HEK293 (cell line): ENCODE measurements at regions of chr19 and their contacts with region 1.

Region 1: DNA sequence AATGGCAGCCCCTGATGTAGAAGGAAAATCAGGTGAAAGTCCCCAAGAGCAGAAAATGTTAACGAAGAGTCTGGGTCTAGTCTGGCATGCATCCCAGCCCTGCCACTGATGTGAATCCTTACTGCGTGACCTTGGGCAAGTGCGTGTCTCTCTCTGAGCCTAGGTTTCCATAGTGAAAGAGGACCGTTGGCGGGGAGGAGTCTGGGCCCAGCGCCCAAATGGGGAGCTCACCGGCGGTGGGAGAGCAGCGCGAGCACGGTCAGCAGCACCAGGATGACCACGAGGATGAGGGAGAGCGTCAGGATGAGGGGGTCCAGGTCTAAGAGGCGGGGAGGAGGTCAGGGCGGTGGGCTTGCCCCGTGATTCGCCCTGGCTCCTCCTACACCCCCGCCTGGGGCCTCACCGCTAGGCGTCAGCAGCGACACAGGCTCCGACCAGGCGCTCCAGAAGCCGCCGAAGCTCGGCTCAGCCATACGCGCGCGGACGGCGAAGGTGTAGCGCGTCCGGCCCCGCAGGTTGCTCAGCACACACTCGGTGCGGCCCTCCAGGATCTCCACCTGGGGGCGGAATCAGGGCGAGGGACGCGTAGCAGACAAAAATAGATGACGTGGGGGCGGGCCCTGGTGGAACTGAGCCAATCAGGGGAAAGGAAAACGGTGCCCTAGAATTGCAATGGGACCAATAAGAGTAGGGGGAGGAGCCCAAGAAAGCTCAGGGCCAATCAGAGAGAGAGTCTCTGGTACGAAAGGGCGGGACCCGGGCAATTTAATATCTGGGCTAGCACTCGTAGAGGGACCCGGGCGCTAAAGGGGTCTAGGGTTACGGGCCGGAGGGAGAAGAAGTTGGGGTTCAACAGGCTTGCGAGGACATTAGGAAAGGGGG is 3.2 kb downstream of the EPOR start:
- H3K4me3 ChIP-seq: peak overlapping the region; percentile 55
- H3K27ac ChIP-seq: peak overlapping the region; percentile 59; the same call in 1 of the 2 replicates
- H3K4me1 ChIP-seq: no peaks in the 10 kb centered on the region; the same call in 1 of the 2 replicates
- CTCF ChIP-seq: peak; percentile 97

Region 2: DNA sequence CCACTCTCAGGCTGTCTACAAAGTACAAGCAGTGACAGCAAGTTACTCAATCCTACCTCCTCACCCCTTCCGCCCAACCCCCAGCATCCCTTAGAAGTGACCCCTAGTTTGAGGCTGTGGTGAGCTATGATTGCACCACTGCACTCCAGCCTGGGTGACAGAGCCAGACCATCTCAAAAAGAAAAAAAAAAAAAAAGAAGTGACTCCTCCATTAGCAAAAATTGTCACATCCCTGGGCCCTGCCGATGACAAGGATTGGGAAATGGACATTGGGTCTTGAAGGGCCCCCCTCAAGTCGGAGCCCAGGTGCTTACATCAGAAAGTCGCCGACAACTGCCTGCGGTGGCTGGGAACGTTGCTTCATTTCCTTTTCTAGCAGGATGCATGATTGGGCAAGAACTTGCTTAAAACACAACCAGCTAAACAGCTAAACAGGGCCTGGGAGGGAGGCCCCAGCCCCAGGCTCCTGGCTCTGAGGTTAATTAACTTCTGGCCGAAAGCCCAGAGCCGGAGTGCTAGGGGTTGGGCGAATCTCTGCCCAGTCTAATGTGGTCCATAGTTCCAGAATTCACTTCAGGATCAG is 56.7 kb before region 1 on chr19:
- CTCF ChIA-PET with region 1: interaction called, 10 read pairs
- POLR2A ChIA-PET with region 1: interaction called, 6 read pairs
- H3K4me3 ChIP-seq: no peak overlapping the region
- H3K27ac ChIP-seq: peak overlapping the region; percentile 63; the same call in 1 of the 2 replicates
- H3K4me1 ChIP-seq: peaks cover 20% of the 10 kb centered on the region
- CTCF ChIP-seq: no peak

Region 3: GRCh38 chr19:11355160-11356073 is 25.5 kb before region 1 on chr19 and contains the start of gene PLPPR2:
- CTCF ChIA-PET with region 1: interaction called, 4 read pairs
- POLR2A ChIA-PET with region 1: interaction called, 14 read pairs
- H3K4me3 ChIP-seq: peak within 1 kb of the TSS; percentile 49
- H3K27ac ChIP-seq: no peak within 1 kb of the TSS
- H3K4me1 ChIP-seq: no peaks in the 10 kb centered on the region; the same call in 1 of the 2 replicates
- CTCF ChIP-seq: no peak

Region 4: DNA sequence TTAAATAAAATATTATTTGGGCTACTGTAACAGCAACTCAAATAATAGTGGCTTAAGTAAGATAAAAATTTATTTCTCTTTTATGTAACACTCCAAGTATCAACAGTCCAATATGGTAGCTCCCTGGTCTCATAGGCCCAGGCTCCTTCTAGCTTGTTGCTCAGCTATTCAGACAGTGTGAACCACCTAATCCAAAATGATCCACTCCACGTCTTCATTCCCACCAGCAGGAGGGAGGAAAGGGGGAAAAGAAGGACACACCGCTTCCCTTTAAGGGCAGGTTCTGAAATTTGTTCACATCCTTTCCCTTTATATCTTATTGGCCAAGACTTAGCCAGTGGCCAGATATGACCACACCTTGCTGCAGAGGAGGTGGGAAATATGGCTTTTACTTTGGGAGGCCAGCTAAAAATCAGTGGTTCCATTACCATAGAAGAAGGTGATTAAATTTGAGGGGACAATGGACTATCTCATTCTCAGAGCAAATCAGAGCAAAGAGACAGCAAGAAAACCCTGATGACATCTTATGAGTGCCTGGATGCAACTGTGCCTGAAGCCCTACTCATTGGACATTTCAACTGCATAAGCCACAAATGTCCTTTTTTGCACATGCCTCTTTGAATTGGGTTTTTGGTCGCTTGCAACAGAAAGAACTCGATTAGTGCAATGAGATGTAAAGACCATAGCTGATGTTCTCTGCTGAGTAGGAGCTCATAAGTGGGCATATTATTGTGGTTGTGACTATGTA is 10.2 kb after region 1 on chr19:
- CTCF ChIA-PET with region 1: interaction called, 15 read pairs
- POLR2A ChIA-PET with region 1: interaction called, 8 read pairs
- H3K4me3 ChIP-seq: no peak overlapping the region
- H3K27ac ChIP-seq: no peak overlapping the region
- H3K4me1 ChIP-seq: no peaks in the 10 kb centered on the region
- CTCF ChIP-seq: no peak

Region 5: GRCh38 chr19:11405846-11406643 is 25.2 kb after region 1 on chr19:
- CTCF ChIA-PET with region 1: interaction called, 13 read pairs
- POLR2A ChIA-PET with region 1: interaction called, 3 read pairs
- H3K4me3 ChIP-seq: no peak overlapping the region
- H3K27ac ChIP-seq: no peak overlapping the region
- H3K4me1 ChIP-seq: no peaks in the 10 kb centered on the region
- CTCF ChIP-seq: no peak

Region 6: GRCh38 chr19:11435058-11435832 is 54.4 kb after region 1 on chr19 and contains the starts of genes ODAD3 and PRKCSH:
- CTCF ChIA-PET with region 1: interaction called, 66 read pairs
- POLR2A ChIA-PET with region 1: interaction called, 27 read pairs
- H3K4me3 ChIP-seq: peak within 1 kb of the TSS; percentile 91
- H3K27ac ChIP-seq: peak within 1 kb of the TSS; percentile 4; the same call in 1 of the 2 replicates
- H3K4me1 ChIP-seq: 0 out of 2 replicates have a peak, but pooled peaks cover 4% of the 10 kb centered on the region
- CTCF ChIP-seq: peak; percentile 96

Region 7: GRCh38 chr19:11482384-11483050 is 101.6 kb after region 1 on chr19:
- CTCF ChIA-PET with region 1: interaction called, 42 read pairs
- POLR2A ChIA-PET with region 1: interaction called, 13 read pairs
- H3K4me3 ChIP-seq: peak overlapping the region; percentile 28
- H3K27ac ChIP-seq: peak overlapping the region; percentile 33; the same call in 1 of the 2 replicates
- H3K4me1 ChIP-seq: no peaks in the 10 kb centered on the region
- CTCF ChIP-seq: peak; percentile 97

Region 8: DNA sequence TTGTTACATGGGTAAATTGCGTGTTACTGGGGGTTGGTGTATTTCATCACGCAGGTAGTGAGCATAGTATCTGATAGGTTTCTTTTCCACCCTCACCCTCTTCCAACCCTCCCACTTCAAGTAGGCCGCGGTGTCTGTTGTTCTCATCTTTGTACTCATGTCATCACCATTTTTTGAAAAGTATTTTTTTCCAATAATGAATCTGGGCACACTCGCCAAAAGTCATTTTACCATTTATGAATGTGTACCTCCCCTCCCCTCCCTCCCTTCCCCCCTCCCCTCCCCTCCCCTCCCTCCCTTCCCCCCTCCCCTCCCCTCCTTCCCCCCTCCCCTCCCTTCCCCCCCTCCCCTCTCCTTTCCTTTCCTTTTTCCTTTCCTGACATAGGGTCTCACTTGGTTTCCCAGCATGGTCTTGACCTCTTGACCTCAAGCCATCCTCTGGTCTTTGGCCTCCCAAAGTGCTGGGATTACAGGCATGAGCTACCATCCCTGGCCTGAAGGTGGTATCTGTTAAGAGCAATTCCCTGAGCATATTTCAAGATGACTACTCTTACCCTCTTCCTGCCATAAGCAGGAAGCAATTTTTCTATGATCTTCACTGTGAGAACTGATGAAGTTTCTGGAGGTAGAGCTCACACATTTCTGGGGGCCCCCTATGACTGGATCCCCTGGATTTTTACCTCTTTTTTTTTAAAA is 232.1 kb after region 1 on chr19:
- CTCF ChIA-PET with region 1: no interaction called
- POLR2A ChIA-PET with region 1: no interaction called
- H3K4me3 ChIP-seq: no peak overlapping the region
- H3K27ac ChIP-seq: no peak overlapping the region
- H3K4me1 ChIP-seq: no peaks in the 10 kb centered on the region
- CTCF ChIP-seq: no peak